OCI-LY7 (cell line): ENCODE measurements at regions of chr17 and their contacts with region 1.

Region 1: DNA sequence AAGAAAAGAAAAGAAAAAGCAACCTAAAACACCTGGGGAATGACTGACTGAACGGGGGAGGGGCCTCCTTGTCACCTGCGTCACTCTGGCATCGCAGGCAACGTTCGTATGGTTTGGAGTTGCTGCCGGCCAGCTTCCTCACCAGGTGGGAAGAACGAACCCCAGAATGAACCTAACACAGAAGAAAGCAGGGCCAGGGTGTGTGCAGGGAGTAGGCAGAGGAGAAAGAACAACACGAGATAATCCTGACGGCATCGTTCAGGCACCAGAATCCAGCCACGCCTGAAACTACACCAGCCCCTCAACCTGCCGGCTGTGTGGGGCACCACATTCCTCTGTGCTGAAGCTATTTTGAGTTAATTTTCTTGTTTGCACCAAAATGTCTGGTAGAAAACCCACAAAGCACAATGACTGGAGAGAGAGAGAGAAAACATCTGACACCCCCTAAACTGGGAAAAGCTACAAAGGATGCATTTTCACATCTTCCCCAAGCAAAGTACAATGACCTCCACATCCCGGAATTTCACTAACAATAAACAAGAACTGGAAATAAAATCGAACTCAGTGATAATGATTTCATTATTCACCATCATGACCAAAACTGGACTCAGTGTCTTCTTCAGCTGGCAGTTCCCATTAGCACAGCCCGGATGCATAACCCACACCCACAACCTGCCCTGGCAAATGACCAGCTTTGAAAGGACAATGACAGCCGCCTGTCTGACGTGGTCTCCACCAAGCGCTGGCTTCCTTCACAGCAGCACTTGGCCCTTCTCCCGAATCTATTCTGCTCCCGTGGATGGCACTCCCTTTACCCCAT is 23.6 kb downstream of the RAB40B start:
- DNase-seq: peak; percentile 26
- H3K4me3 ChIP-seq: no peak overlapping the region
- H3K27ac ChIP-seq: no peak overlapping the region
- H3K4me1 ChIP-seq: peaks cover 50% of the 10 kb centered on the region
- CTCF ChIP-seq: no peak

Region 2: GRCh38 chr17:82450170-82451106 is 224.4 kb before region 1 on chr17 and contains the start of gene CYBC1:
- CTCF ChIA-PET with region 1: no interaction called
- POLR2A ChIA-PET with region 1: no interaction called
- intact Hi-C with region 1: loop called (anchors 2 kb)
- DNase-seq: peak; percentile 99
- H3K4me3 ChIP-seq: peak within 1 kb of the TSS; percentile 80
- H3K27ac ChIP-seq: peak within 1 kb of the TSS; percentile 98
- H3K4me1 ChIP-seq: peaks cover 40% of the 10 kb centered on the region
- CTCF ChIP-seq: no peak
- total RNA-seq, gene CYBC1: 424 and 470 TPM in 2 replicates

Region 3: DNA sequence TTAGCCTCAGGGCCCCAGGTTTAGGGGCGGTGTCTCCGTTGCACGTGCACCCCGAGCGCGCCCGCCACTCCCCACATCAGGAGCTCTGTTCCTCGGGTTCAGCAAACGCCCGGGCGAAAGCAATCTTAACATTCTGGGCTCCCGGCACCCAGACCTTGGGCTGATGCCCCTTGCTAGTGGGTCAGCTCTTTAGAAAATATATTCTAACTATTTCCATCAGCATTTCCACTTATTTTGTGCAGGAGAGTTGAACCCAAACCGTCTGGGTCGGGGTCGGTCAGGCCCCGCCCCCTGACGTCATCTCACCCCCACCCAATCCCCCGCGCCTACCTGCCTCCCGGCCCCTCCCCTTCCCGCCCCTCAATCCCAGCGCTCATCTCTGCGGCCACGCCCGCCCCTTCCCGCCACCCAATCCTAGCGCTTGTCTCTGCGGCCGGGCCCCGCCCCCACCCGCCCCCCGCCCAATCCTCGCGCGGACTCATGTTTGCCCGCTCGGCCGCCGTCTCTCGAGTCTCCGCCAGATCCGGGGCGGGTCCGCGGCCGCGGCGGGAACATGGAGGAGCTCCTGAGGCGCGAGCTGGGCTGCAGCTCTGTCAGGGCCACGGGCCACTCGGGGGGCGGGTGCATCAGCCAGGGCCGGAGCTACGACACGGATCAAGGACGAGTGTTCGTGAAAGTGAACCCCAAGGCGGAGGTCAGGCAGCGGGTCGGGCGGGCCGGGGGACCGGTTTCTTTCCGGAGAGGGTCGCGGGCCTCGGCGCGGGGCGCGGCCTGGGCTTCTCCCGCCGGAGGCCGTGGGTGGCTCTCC is 41.5 kb after region 1 on chr17 and contains the start of gene FN3KRP:
- CTCF ChIA-PET with region 1: interaction called, 6 read pairs
- POLR2A ChIA-PET with region 1: interaction called, 6 read pairs
- intact Hi-C with region 1: loop called (anchors 2 kb)
- DNase-seq: peak; percentile 98
- H3K4me3 ChIP-seq: peak within 1 kb of the TSS; percentile 89
- H3K27ac ChIP-seq: peak within 1 kb of the TSS; percentile 40
- H3K4me1 ChIP-seq: peaks cover 24% of the 10 kb centered on the region
- CTCF ChIP-seq: no peak
- total RNA-seq, gene FN3KRP: 52.1 and 56.5 TPM in 2 replicates

Region 4: GRCh38 chr17:82767041-82767754 is 92.3 kb after region 1 on chr17:
- CTCF ChIA-PET with region 1: no interaction called
- POLR2A ChIA-PET with region 1: no interaction called
- intact Hi-C with region 1: loop called (anchors 1 kb)
- DNase-seq: peak; percentile 73
- H3K4me3 ChIP-seq: no peak overlapping the region
- H3K27ac ChIP-seq: no peak overlapping the region
- H3K4me1 ChIP-seq: no peaks in the 10 kb centered on the region
- CTCF ChIP-seq: peak; percentile 92

Region 5: DNA sequence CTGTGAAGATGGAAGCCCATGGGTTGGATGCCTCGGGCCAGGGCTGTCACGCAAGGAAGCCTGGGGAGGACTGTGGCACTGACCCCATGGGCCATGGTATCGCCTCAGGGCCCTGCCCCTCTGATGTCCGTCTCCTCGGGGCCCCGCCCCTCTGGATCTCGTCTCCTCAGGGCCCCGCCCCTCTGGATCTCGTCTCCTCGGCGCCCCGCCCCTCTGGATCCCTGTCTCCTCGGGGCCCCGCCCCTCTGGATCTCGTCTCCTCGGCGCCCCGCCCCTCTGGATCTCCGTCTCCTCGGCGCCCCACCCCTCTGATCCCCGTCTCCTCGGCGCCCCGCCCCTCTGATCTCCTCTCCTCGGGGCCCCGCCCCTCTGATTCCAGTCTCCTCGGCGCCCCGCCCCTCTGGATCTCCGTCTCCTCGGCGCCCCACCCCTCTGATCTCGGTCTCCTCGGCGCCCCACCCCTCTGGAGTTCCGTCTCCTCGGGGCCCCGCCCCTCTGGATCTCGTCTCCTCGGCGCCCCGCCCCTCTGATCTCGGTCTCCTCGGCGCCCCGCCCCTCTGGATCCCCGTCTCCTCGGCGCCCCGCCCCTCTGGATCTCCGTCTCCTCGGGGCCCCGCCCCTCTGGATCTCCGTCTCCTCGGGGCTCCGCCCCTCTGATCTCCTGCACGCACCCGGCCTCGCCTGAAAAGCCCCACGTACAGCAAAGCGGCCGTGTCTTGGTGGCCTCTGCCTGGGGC is 428.6 kb after region 1 on chr17:
- CTCF ChIA-PET with region 1: no interaction called
- POLR2A ChIA-PET with region 1: no interaction called
- intact Hi-C with region 1: loop called (anchors 5 kb)
- DNase-seq: peak; percentile 30
- H3K4me3 ChIP-seq: no peak overlapping the region
- H3K27ac ChIP-seq: no peak overlapping the region
- H3K4me1 ChIP-seq: peaks cover 43% of the 10 kb centered on the region
- CTCF ChIP-seq: no peak